ENCODE measurements at regions of chr15 and their contacts with region 1.

Region 1: DNA sequence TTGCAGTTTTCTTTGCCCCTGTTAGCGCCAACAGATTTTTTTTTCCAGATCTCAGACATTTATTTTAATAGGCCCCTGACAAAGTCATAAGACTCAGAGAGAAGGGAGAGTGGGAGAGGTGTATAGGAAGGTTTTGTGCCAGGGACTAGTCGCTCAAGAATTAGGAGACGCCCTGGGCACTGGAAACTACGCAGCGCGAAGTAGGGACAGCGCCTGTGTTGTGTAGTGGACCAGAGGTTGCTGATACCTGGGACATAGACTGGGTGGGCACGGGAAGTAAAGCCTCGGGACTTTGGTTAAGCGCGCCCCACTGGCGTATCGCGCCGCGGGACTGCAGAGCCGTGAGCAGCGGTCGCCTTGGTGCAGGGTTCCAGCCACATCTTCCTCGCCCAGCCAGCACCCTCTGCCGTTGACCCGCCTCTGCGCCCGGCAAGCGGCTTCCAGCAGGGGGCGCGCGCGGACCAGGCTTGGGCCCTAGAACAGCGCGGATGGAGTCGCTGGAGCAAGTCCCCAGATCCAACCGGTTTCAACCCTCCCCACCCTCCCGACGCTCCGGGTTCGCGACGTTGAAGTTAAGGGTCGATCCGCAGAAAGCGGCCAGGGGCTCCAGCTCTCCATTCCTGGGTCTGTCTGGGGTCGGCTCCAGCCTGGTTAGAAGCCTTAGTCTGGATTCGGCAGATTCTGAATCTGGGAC is 3.0 kb upstream of the ISLR2 start:
- DNase-seq: peak; percentile 89 to 95 (median 91)
- ATAC-seq: peak; percentile 87 to 96 (median 96)
- H3K4me3 ChIP-seq: peak overlapping the region; percentile 13 to 64 (median 50)
- H3K27ac ChIP-seq: peak overlapping the region in 9 of 12 donors; percentile 63 to 88 (median 78)
- H3K4me1 ChIP-seq: peaks cover 0 to 43% (median 21%) of the 10 kb centered on the region in 12 donors
- H3K27me3 ChIP-seq: peaks cover 12 to 84% (median 48%) of the 10 kb centered on the region in 9 donors
- CTCF ChIP-seq: peak; percentile 97 to 100 (median 99)
- POLR2A ChIP-seq: no peak

Region 2: GRCh38 chr15:73972984-73973682 is 154.3 kb before region 1 on chr15:
- intact Hi-C with region 1: loop called in 5 of 10 experiments (anchors 5 to 10 kb)
- DNase-seq: peak; percentile 83 to 90 (median 87)
- ATAC-seq: peak; percentile 85 to 95 (median 92)
- H3K4me3 ChIP-seq: peak overlapping the region in 9 of 12 donors; percentile 12 to 43 (median 32)
- H3K27ac ChIP-seq: peak overlapping the region in 1 of 12 donors; percentile 13
- H3K4me1 ChIP-seq: peaks cover 0 to 12% (median 8%) of the 10 kb centered on the region in 12 donors
- H3K27me3 ChIP-seq: peaks cover 0 to 6% (median 0%) of the 10 kb centered on the region in 9 donors
- CTCF ChIP-seq: peak; percentile 69 to 94 (median 84)
- POLR2A ChIP-seq: no peak

Region 3: DNA sequence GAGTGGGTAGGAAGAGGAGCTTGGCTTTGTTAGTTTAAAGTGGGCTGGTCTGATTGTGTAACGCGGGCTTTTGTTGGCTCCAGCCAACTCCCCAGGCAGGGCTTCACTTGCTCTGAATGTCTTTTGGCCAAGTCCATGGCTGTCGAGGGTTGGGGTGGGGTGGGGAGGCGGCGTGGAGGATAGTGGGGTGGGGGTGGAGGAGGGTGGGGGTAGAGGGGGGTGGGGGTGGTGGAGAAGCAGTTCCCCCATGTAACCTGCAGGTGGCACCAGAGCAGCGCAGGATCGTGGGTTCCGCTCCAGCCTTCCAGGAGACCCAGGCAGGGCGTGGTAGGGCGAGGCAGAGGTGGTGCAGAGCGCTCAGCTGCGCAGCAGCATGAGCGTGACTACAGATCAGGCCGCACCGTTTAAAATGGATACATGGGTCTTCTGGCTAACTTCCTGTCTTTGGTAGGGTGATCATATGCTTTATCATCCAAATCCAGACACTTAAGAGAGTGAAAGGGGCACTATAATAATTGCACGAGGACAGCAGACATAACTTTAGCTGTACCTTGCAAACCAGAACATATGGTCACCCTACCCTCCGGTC is 73.4 kb before region 1 on chr15:
- intact Hi-C with region 1: loop called in 2 of 10 experiments (anchors 5 to 10 kb)
- DNase-seq: peak; percentile 68 to 88 (median 77)
- ATAC-seq: peak; percentile 46 to 85 (median 72)
- H3K4me3 ChIP-seq: peak overlapping the region in 2 of 12 donors; percentile 25 to 32
- H3K27ac ChIP-seq: peak overlapping the region in 3 of 12 donors; percentile 29 to 52 (median 48)
- H3K4me1 ChIP-seq: peaks cover 0 to 38% (median 24%) of the 10 kb centered on the region in 12 donors
- H3K27me3 ChIP-seq: no peaks in the 10 kb centered on the region
- CTCF ChIP-seq: peak; percentile 38 to 84 (median 59)
- POLR2A ChIP-seq: no peak

Region 4: DNA sequence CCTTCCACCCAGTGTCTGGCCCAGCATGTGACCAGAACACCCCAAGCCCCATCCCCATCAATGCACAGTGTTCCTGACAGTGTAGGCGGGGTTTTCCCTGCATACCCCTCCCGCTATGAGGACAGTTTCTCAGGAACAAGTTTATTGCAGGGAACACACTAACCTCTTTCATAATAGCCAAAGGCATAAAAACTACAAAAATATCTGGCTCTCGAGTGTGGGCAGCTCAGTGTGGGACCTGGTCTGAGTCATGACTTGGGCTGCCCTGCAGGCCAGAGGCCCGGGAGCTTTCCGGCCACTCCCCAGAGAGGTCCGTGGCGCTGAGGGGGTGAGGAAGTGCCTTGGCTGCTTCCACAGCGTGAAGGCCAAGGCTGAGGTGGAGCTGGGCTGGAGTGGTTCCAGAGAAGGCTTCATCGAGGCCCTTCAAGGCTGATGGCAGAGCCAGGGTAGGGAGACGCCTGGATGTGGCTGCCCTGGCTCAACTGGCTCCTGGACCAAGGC is 52.0 kb after region 1 on chr15:
- intact Hi-C with region 1: loop called in 1 of 10 experiments (anchors 2 kb)
- DNase-seq: peak; percentile 79 to 90 (median 88)
- ATAC-seq: peak; percentile 73 to 91 (median 88)
- H3K4me3 ChIP-seq: peak overlapping the region in 1 of 12 donors; percentile 9
- H3K27ac ChIP-seq: peak overlapping the region; percentile 28 to 88 (median 68)
- H3K4me1 ChIP-seq: peaks cover 0 to 63% (median 45%) of the 10 kb centered on the region in 12 donors
- H3K27me3 ChIP-seq: no peaks in the 10 kb centered on the region
- CTCF ChIP-seq: no peak
- POLR2A ChIP-seq: no peak

Region 5: GRCh38 chr15:74240002-74240568 is 112.7 kb after region 1 on chr15:
- intact Hi-C with region 1: loop called in 2 of 10 experiments (anchors 5 kb)
- DNase-seq: peak; percentile 86 to 95 (median 91)
- ATAC-seq: peak; percentile 81 to 91 (median 86)
- H3K4me3 ChIP-seq: no peak overlapping the region
- H3K27ac ChIP-seq: peak overlapping the region in 11 of 12 donors; percentile 24 to 76 (median 42)
- H3K4me1 ChIP-seq: peaks cover 0 to 41% (median 28%) of the 10 kb centered on the region in 12 donors
- H3K27me3 ChIP-seq: peaks cover 0 to 2% (median 0%) of the 10 kb centered on the region in 9 donors
- CTCF ChIP-seq: peak; percentile 32 to 69 (median 52)
- POLR2A ChIP-seq: no peak

Region 6: GRCh38 chr15:74302821-74303359 is 175.5 kb after region 1 on chr15:
- intact Hi-C with region 1: loop called (anchors 1 to 5 kb)
- DNase-seq: peak in 2 of 5 donors; percentile 40 to 43
- ATAC-seq: peak in 3 of 4 donors; percentile 47 to 65 (median 59)
- H3K4me3 ChIP-seq: no peak overlapping the region
- H3K27ac ChIP-seq: no peak overlapping the region
- H3K4me1 ChIP-seq: peaks cover 0 to 12% (median 0%) of the 10 kb centered on the region in 12 donors
- H3K27me3 ChIP-seq: peaks cover 0 to 47% (median 12%) of the 10 kb centered on the region in 9 donors
- CTCF ChIP-seq: peak; percentile 47 to 76 (median 61)
- POLR2A ChIP-seq: no peak

Region 7: DNA sequence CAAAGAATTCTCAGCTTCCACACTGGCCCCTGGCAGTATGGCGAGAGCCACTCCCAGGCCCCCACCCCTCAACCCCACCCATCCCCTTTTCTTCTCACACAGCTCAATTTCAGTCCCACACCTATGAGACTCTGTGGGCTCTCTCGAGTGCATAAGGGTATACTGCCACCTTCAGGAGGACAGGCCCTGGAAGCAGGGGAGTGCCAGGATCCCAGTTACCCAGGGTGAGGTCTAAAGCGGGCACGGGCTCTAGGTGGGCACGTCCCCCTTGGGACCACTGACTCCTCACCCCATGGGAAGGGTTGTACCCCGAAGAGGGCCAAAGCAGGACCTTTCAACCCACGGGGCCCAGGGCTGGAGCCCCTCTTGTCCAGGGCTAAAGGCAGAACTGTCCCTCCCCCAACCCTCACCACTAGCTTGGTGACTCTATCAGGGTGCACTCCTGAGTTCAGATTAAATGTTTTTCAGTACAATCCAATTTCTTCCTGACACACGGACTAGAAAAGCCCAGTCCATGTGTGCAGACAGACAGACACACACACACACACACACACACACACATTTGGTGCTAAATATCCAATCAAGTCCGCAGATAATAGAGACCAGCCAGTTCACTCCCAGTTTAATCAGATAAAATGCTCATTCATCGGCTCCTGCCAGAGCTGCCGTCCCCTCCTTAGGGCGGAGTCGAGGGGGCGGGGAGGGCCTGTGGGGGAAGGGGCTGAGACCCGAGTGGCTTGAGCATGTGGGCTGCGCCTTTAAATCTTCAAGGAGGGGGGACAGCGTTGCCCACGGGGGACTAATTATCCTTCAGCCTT is 180.6 kb after region 1 on chr15:
- intact Hi-C with region 1: loop called (anchors 1 to 5 kb)
- DNase-seq: peak in 4 of 5 donors; percentile 38 to 61 (median 50)
- ATAC-seq: peak; percentile 78 to 91 (median 82)
- H3K4me3 ChIP-seq: no peak overlapping the region
- H3K27ac ChIP-seq: no peak overlapping the region
- H3K4me1 ChIP-seq: peaks cover 0 to 12% (median 0%) of the 10 kb centered on the region in 12 donors
- H3K27me3 ChIP-seq: peaks cover 0 to 36% (median 12%) of the 10 kb centered on the region in 9 donors
- CTCF ChIP-seq: peak; percentile 47 to 78 (median 72)
- POLR2A ChIP-seq: no peak

Measured in heart left ventricle (tissue), 16 donors.